Psoas muscle (tissue), 8 donors: ENCODE measurements at regions of chr3 and their contacts with region 1.

Region 1: DNA sequence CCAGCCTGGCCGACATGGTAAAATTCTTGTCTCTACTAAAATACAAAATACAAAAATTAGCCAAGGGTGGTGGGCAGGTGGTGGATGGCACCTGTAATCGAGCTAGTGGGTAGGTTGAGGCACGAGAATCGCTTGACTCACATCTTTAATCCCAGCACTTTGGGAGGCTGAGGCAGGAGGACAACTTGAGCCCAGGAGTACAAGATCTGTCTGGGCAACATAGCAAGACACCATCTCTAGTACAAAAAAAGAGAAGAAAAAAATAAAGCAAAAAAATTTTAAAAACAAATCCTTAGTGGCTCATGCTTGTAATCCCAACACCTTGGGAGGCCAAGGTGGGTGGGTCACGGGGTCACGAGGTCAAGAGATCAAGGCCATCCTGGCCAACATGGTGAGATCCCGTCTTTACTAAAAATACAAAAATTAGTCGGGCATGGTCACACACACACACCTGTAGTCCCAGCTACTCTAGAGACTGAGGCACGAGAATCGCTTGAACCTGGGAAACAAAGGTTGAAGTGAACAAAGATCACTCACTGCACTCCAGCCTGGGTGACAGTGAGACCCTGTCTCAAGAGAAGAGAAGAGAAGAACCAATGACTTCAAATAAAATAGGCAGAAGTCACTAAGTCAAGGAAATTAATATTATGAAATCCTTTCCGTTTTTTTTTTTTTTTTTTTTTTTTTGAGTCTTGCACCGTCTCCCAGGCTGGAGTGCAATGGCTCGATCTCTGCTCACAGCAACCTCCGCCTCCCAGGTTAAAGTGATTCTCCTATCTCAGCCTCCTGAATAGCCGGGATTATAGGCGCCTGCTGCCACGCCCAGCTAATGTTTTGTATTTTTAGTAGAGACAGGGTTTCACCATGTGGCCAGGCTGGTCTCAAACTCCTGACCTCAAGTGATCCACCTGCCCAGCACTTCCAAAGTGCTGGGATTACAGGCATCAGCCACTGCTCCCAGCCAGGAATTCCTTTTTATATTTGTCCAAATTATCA is 4.9 kb downstream of the RHOA start:
- DNase-seq: peak in 1 of 2 donors; percentile 32
- ATAC-seq: no peak
- H3K4me3 ChIP-seq: no peak overlapping the region
- H3K27ac ChIP-seq: peak overlapping the region; percentile 99
- H3K4me1 ChIP-seq: peaks cover 58% of the 10 kb centered on the region
- H3K27me3 ChIP-seq: no peaks in the 10 kb centered on the region
- CTCF ChIP-seq: no peak

Region 2: GRCh38 chr3:49346797-49347251 is 60.0 kb before region 1 on chr3:
- intact Hi-C with region 1: loop called (anchors 1 to 5 kb)
- DNase-seq: no peak
- ATAC-seq: no peak
- H3K4me3 ChIP-seq: no peak overlapping the region
- H3K27ac ChIP-seq: peak overlapping the region; percentile 73
- H3K4me1 ChIP-seq: peaks cover 10% of the 10 kb centered on the region
- H3K27me3 ChIP-seq: no peaks in the 10 kb centered on the region
- CTCF ChIP-seq: no peak